Tibial artery (tissue), 4 donors: ENCODE measurements at regions of chr1 and their contacts with region 1.

Region 1: GRCh38 chr1:214602764-214603657 is at the start of gene CENPF:
- DNase-seq: peak; percentile 96 to 97
- H3K4me3 ChIP-seq: peak within 1 kb of the TSS; percentile 55 to 84
- H3K27ac ChIP-seq: no peak within 1 kb of the TSS
- H3K4me1 ChIP-seq: peaks cover 0 to 14% (median 6%) of the 10 kb centered on the region in 4 donors
- H3K27me3 ChIP-seq: no peaks in the 10 kb centered on the region
- CTCF ChIP-seq: peak; percentile 4 to 37

Region 2: DNA sequence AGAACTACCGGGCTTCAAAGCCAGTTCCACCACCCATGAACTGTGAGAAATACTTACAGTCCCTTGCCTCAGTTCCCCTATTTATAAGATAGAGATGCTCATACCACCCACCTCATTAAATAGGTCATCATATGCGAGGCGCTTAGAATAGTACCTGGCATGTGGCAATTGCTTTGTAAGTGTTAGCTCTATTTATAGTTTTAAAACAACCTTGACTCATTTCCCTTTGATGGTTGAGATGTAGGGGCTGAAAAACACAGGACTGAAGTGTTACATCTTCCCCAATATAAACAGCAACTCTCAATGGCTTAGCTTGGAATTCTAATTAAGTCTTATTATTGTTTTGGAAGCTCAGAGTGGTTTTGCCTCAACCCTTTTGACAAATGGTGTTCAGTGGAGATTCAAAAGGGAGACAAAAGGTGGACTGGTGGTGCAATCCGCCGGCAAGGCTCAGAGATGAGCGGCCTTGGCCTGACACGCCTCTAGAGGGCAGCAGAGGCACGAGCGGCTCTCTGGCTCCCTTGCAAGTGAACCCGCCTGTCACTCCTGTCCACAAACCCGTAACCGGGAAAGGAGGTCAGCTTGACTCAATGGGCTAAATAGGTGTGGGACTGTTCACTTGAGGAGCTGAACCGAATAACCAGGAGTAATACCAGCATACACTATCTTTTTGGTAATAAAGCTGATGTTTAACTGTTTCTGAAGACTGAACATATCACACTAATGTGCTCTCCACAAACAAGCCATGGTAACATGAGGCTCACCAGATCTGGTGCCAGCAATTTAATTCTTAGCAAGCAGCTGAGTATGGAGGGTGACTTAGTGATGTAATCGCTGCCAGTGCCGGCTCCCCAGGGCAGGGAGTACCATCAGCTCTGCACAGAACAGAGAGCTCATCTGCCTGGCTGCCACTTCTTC is 341.5 kb before region 1 on chr1:
- intact Hi-C with region 1: loop called (anchors 10 kb)
- DNase-seq: peak; percentile 74 to 86
- H3K4me3 ChIP-seq: no peak overlapping the region
- H3K27ac ChIP-seq: no peak overlapping the region
- H3K4me1 ChIP-seq: peaks cover 0 to 4% (median 0%) of the 10 kb centered on the region in 4 donors
- H3K27me3 ChIP-seq: peaks cover 0 to 38% of the 10 kb centered on the region in 2 donors
- CTCF ChIP-seq: peak; percentile 86 to 97